Aorta (tissue), 5 donors: ENCODE measurements at regions of chr20 and their contacts with region 1.

Region 1: GRCh38 chr20:10297684-10298240 is 79.1 kb downstream of the SNAP25 start:
- DNase-seq: no peak
- ATAC-seq: peak; percentile 75
- H3K4me3 ChIP-seq: no peak overlapping the region
- H3K27ac ChIP-seq: peak overlapping the region in 1 of 2 donors; percentile 61
- H3K4me1 ChIP-seq: peaks cover 0 to 6% of the 10 kb centered on the region in 2 donors
- H3K27me3 ChIP-seq: no peaks in the 10 kb centered on the region

Region 2: GRCh38 chr20:10357974-10358373 is 60.2 kb after region 1 on chr20:
- intact Hi-C with region 1: loop called in 1 of 2 experiments (anchors 10 kb)
- DNase-seq: no peak
- ATAC-seq: no peak
- H3K4me3 ChIP-seq: no peak overlapping the region
- H3K27ac ChIP-seq: no peak overlapping the region
- H3K4me1 ChIP-seq: no peaks in the 10 kb centered on the region
- H3K27me3 ChIP-seq: no peaks in the 10 kb centered on the region

Region 3: DNA sequence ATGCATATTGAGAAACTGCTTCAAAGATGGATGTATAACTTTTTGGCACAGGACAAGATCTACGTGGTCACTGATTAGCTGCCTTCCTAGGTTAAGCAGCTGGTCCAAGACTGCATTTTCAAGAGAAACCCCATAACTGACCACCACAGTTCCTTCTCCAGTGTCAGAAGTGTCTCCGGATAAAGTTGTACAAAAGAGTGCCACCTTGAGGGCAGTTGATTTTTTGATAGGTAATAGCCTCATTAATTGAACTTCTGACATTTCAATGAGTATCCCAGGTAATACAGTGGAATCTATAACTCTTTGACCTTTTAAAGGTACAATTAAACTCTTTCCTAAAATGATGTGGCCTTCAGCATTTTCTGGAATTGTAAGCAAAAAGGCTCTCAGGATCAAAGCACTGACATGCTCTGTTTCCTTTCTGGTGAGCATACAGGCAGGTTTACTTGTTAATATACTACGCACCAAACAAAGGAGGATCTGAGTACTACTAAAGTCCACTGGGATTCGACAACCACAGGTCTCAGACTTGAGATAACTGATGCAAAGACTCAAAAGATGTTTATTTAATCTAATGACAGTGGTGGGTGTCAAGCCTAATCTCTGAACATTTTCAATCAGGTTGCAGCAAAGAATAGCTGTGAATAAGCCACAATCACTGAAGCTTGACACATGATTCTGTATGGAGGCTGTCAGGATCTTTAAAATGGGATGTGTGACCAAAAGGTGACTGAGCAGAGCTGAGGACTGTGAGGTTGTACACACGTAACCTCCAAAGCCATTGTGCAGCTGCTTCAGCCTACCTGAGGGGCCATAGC is 115.0 kb after region 1 on chr20:
- intact Hi-C with region 1: no loop called
- DNase-seq: no peak
- ATAC-seq: no peak
- H3K4me3 ChIP-seq: no peak overlapping the region
- H3K27ac ChIP-seq: no peak overlapping the region
- H3K4me1 ChIP-seq: peaks cover 0 to 3% of the 10 kb centered on the region in 2 donors
- H3K27me3 ChIP-seq: no peaks in the 10 kb centered on the region